Upper lobe of right lung (tissue), 1 donor: ENCODE measurements at regions of chr17 and their contacts with region 1.

Region 1: GRCh38 chr17:48593840-48594537 is 410 bp upstream of the HOXB5 start:
- DNase-seq: peak; percentile 84
- ATAC-seq: peak; percentile 76
- H3K4me3 ChIP-seq: peak overlapping the region; percentile 55
- H3K27ac ChIP-seq: peak overlapping the region; percentile 25
- H3K4me1 ChIP-seq: peaks cover 28% of the 10 kb centered on the region
- H3K27me3 ChIP-seq: peaks cover 87% of the 10 kb centered on the region
- CTCF ChIP-seq: peak; percentile 90

Region 2: GRCh38 chr17:48351831-48352332 is 242.1 kb before region 1 on chr17:
- intact Hi-C with region 1: loop called (anchors 5 kb)
- DNase-seq: no peak
- ATAC-seq: no peak
- H3K4me3 ChIP-seq: no peak overlapping the region
- H3K27ac ChIP-seq: no peak overlapping the region
- H3K4me1 ChIP-seq: no peaks in the 10 kb centered on the region
- H3K27me3 ChIP-seq: peaks cover 30% of the 10 kb centered on the region
- CTCF ChIP-seq: peak; percentile 67

Region 3: GRCh38 chr17:48478224-48479013 is 115.6 kb before region 1 on chr17:
- intact Hi-C with region 1: no loop called
- DNase-seq: no peak
- ATAC-seq: peak; percentile 45
- H3K4me3 ChIP-seq: no peak overlapping the region
- H3K27ac ChIP-seq: no peak overlapping the region
- H3K4me1 ChIP-seq: no peaks in the 10 kb centered on the region
- H3K27me3 ChIP-seq: no peaks in the 10 kb centered on the region
- CTCF ChIP-seq: no peak

Region 4: GRCh38 chr17:48690655-48691054 is 96.7 kb after region 1 on chr17:
- intact Hi-C with region 1: no loop called
- DNase-seq: no peak
- ATAC-seq: no peak
- H3K4me3 ChIP-seq: no peak overlapping the region
- H3K27ac ChIP-seq: no peak overlapping the region
- H3K4me1 ChIP-seq: no peaks in the 10 kb centered on the region
- H3K27me3 ChIP-seq: peaks cover 36% of the 10 kb centered on the region
- CTCF ChIP-seq: no peak